ENCODE measurements at regions of chr19 and their contacts with region 1.

Region 1: GRCh38 chr19:17511724-17512573 is 500 bp downstream of the PGLS start:
- DNase-seq: peak; percentile 86 to 90 (median 88)
- H3K4me3 ChIP-seq: peak overlapping the region; percentile 50 to 96
- H3K4me3 Mint-ChIP-seq: peak overlapping the region; percentile 88 to 100 (median 98)
- H3K27ac ChIP-seq: peak overlapping the region; percentile 92
- H3K27ac Mint-ChIP-seq: peak overlapping the region; percentile 90 to 98 (median 95)
- H3K4me1 ChIP-seq: peaks cover 20% of the 10 kb centered on the region
- H3K4me1 Mint-ChIP-seq: peaks cover 17 to 47% (median 30%) of the 10 kb centered on the region in 4 donors
- H3K27me3 ChIP-seq: no peaks in the 10 kb centered on the region
- H3K27me3 Mint-ChIP-seq: no peaks in the 10 kb centered on the region

Region 2: DNA sequence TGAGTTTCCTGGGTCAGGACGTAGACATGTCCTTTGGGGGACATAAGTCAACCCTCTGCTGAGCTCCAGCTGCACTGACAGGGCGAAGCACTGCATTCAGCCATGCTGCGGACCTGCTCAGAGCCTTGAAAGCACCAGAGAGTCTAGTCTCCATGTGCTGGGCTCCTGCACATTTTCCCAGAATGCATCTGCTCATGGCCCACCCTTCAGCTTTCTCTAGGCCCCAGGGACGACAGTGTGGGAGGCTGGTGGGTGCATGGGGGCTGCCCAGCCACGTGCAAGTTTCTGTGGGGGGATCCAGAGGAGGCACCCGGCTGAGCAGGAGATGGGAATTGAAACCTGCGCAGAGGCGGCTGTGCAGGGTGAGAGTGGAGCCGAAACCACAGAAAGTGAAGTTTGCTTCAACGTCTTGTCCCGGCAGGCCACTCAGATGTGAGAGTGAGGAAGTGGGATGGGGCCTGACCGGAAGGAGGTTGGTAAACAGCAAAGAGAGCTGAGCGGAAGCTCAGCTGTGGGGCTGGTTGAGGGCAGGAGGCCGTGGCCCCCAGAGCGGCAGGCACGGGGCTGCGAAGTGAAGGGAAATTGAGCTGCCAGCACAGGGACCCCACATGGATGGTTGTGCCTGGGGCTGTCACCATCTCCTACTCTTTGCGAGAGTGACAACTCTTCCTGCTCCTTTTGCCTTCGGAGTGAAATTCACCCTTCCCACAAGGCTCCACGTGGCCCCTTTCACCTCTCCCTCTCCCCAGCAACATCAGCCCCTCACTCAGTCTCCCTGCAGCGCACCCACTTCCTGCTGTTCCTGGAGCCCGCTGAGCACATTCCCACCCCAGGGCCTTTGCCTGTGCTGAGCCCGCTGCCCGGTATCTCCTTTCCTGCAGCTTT is 11.3 kb after region 1 on chr19:
- CTCF ChIA-PET with region 1: interaction called, 4 read pairs
- POLR2A ChIA-PET with region 1: interaction called, 69 read pairs
- intact Hi-C with region 1: no loop called
- DNase-seq: peak in 3 of 5 donors; percentile 26 to 40 (median 37)
- H3K4me3 ChIP-seq: peak overlapping the region in 1 of 2 donors; percentile 20
- H3K4me3 Mint-ChIP-seq: peak overlapping the region; percentile 72 to 90 (median 79)
- H3K27ac ChIP-seq: peak overlapping the region; percentile 46
- H3K27ac Mint-ChIP-seq: peak overlapping the region; percentile 76 to 92 (median 89)
- H3K4me1 ChIP-seq: peaks cover 26% of the 10 kb centered on the region
- H3K4me1 Mint-ChIP-seq: peaks cover 13 to 29% (median 17%) of the 10 kb centered on the region in 4 donors
- H3K27me3 ChIP-seq: no peaks in the 10 kb centered on the region
- H3K27me3 Mint-ChIP-seq: no peaks in the 10 kb centered on the region

Measured in CD4-positive, alpha-beta memory T cell (primary cell).